Activated naive CD4-positive, alpha-beta T cell treated with anti-CD3 and anti-CD28 coated beads, Interleukin-2, amount 10 ng/mL, durations not matched to agents 7 days and 5 days (primary cell): ENCODE measurements at regions of chr21 and their contacts with region 1.

Region 1: GRCh38 chr21:36976882-36977651 is 10.6 kb upstream of the HLCS start:
- DNase-seq: peak; percentile 38
- H3K4me3 Mint-ChIP-seq: no peak overlapping the region
- H3K27ac Mint-ChIP-seq: no peak overlapping the region
- H3K4me1 Mint-ChIP-seq: peaks cover 25% of the 10 kb centered on the region
- H3K27me3 Mint-ChIP-seq: peaks cover 31% of the 10 kb centered on the region

Region 2: GRCh38 chr21:36966066-36966820 is 10.8 kb before region 1 on chr21 and contains the start of gene HLCS:
- CTCF ChIA-PET with region 1: interaction called, 12 read pairs
- DNase-seq: peak; percentile 79
- H3K4me3 Mint-ChIP-seq: peak within 1 kb of the TSS; percentile 78
- H3K27ac Mint-ChIP-seq: peak within 1 kb of the TSS; percentile 76
- H3K4me1 Mint-ChIP-seq: peaks cover 20% of the 10 kb centered on the region
- H3K27me3 Mint-ChIP-seq: peaks cover 2% of the 10 kb centered on the region

Region 3: DNA sequence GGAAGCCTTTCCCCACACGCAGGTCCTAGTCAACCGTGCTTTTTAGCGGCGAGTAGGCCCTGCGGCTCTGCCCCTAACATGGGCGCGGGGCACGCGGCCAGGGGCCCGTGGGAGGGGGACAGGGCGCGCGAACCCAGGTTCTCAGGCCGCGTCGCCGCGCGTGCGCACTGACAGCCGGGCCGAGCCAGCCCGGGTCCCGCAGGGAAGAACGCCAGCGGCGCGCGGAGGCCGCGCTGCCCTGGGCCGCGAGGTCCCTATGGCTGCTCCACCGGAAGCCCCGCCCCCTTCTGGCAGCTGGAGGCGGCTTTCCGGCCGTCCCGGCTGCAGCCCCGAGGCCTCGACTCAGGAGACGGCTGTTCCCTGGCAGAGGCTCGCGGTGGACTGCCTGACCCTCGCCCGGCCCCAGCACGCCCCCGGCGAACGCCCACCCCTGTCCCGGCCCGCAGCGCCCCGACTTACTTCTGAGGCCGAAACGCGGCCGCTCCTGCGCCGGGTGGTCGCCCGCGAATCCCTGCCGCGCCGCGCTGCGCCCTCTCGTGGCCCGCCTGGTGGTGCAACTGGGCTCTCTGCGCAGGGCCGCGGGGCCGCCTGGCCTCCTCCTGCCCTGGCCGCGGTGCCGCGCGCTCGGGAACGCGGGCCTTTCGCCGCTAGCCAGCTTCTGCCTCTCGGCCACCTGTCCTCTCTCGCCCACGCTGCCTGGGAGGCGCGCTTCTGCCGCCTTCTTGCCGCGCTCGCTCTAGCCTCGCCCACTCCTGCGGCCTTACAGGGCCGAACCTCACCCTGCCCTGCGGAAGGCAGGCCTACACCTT is 12.8 kb after region 1 on chr21:
- CTCF ChIA-PET with region 1: interaction called, 39 read pairs
- DNase-seq: peak; percentile 92
- H3K4me3 Mint-ChIP-seq: peak overlapping the region; percentile 75
- H3K27ac Mint-ChIP-seq: peak overlapping the region; percentile 89
- H3K4me1 Mint-ChIP-seq: peaks cover 53% of the 10 kb centered on the region
- H3K27me3 Mint-ChIP-seq: peaks cover 7% of the 10 kb centered on the region